ENCODE measurements at regions of chr6 and their contacts with region 1.

Region 1: GRCh38 chr6:12911387-12911960 is 194.9 kb downstream of the PHACTR1 start:
- DNase-seq: no peak
- H3K4me3 ChIP-seq: no peak overlapping the region
- H3K27ac ChIP-seq: no peak overlapping the region
- H3K4me1 ChIP-seq: no peaks in the 10 kb centered on the region
- H3K27me3 ChIP-seq: no peaks in the 10 kb centered on the region
- CTCF ChIP-seq: peak; percentile 59 to 70 (median 64)

Region 2: GRCh38 chr6:12545619-12546409 is 365.7 kb before region 1 on chr6:
- intact Hi-C with region 1: no loop called
- DNase-seq: no peak
- H3K4me3 ChIP-seq: no peak overlapping the region
- H3K27ac ChIP-seq: peak overlapping the region; percentile 15 to 59
- H3K4me1 ChIP-seq: peaks cover 4 to 28% of the 10 kb centered on the region in 2 donors
- H3K27me3 ChIP-seq: no peaks in the 10 kb centered on the region
- CTCF ChIP-seq: no peak

Region 3: DNA sequence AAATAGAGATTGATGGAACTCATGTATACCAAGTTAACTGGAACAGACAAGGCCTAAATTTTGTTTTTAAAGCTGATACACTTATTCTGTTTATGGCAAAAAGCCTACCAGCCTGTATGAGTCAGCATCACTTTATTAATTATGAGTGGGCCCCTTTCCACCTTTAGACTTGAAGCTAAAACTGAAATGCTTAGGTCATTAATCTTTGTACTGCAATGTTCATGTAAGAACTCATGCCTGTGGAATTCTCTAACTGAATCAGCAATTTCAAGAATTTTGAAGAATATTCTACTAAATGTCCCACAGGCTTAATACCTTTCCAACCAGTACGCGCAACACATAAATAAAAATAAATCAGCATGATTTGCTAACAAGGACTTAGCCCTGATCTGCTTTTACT is 335.1 kb before region 1 on chr6:
- intact Hi-C with region 1: no loop called
- DNase-seq: no peak
- H3K4me3 ChIP-seq: no peak overlapping the region
- H3K27ac ChIP-seq: no peak overlapping the region
- H3K4me1 ChIP-seq: peaks cover 0 to 4% of the 10 kb centered on the region in 2 donors
- H3K27me3 ChIP-seq: no peaks in the 10 kb centered on the region
- CTCF ChIP-seq: no peak

Region 4: DNA sequence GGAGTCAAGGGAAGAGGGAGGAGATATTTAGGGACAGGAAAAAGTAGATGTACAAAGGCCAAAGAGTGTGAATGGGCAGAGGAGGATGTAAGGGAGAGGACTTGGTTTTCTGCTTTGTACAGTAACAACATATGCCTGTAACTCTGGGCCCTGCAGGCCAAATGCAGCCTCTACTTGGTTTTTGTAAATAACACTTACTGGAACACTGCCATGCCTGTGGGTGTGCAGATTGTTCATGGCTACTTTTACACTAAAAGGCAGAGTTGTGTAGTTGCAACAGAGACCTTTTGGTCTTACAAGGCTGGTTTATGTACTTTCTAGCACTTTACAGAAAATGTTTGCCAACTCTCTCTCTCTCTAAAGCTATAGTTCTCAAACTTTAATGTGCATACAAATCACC is 37.8 kb before region 1 on chr6:
- intact Hi-C with region 1: no loop called
- DNase-seq: no peak
- H3K4me3 ChIP-seq: no peak overlapping the region
- H3K27ac ChIP-seq: no peak overlapping the region
- H3K4me1 ChIP-seq: no peaks in the 10 kb centered on the region
- H3K27me3 ChIP-seq: no peaks in the 10 kb centered on the region
- CTCF ChIP-seq: no peak

Region 5: GRCh38 chr6:12950976-12951375 is 39.5 kb after region 1 on chr6:
- intact Hi-C with region 1: loop called (anchors 5 kb)
- DNase-seq: no peak
- H3K4me3 ChIP-seq: no peak overlapping the region
- H3K27ac ChIP-seq: no peak overlapping the region
- H3K4me1 ChIP-seq: no peaks in the 10 kb centered on the region
- H3K27me3 ChIP-seq: no peaks in the 10 kb centered on the region
- CTCF ChIP-seq: no peak

Region 6: DNA sequence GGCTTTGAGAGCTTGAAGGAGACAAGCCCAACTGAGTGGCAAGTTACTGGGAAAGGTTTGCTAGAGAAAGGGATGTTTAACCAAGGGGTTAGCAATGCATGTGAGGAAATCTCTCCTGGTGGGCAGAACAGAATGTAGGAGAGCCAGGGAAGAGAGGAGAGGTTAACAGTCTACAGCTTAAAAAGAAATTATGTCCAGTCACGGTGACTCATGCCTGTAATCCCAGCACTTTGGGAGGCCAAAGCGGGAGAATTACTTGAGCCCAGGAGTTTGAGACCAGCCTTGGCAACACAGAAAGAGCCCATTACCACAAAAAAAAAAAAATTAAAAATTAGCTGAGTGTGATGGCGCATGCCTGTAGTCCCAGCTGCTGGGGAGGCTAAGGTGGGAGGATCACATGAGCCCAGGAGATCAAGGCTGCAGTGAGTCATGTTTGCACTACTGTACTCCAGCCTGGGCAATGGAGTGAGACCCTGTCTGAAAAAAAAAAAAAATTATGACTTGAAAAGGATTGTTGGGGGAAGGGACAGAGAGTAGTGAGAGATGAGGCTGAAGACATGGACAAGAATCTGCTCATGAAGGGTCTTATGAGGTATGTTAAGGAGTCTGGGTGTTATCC is 151.9 kb after region 1 on chr6:
- intact Hi-C with region 1: no loop called
- DNase-seq: no peak
- H3K4me3 ChIP-seq: no peak overlapping the region
- H3K27ac ChIP-seq: no peak overlapping the region
- H3K4me1 ChIP-seq: peaks cover 0 to 9% of the 10 kb centered on the region in 2 donors
- H3K27me3 ChIP-seq: no peaks in the 10 kb centered on the region
- CTCF ChIP-seq: no peak

Region 7: GRCh38 chr6:13194852-13195251 is 283.4 kb after region 1 on chr6:
- intact Hi-C with region 1: loop called (anchors 10 kb)
- DNase-seq: peak in 1 of 2 donors; percentile 69
- H3K4me3 ChIP-seq: no peak overlapping the region
- H3K27ac ChIP-seq: peak overlapping the region in 1 of 2 donors; percentile 41
- H3K4me1 ChIP-seq: peaks cover 0 to 4% of the 10 kb centered on the region in 2 donors
- H3K27me3 ChIP-seq: no peaks in the 10 kb centered on the region
- CTCF ChIP-seq: peak; percentile 7 to 32 (median 31)

Region 8: DNA sequence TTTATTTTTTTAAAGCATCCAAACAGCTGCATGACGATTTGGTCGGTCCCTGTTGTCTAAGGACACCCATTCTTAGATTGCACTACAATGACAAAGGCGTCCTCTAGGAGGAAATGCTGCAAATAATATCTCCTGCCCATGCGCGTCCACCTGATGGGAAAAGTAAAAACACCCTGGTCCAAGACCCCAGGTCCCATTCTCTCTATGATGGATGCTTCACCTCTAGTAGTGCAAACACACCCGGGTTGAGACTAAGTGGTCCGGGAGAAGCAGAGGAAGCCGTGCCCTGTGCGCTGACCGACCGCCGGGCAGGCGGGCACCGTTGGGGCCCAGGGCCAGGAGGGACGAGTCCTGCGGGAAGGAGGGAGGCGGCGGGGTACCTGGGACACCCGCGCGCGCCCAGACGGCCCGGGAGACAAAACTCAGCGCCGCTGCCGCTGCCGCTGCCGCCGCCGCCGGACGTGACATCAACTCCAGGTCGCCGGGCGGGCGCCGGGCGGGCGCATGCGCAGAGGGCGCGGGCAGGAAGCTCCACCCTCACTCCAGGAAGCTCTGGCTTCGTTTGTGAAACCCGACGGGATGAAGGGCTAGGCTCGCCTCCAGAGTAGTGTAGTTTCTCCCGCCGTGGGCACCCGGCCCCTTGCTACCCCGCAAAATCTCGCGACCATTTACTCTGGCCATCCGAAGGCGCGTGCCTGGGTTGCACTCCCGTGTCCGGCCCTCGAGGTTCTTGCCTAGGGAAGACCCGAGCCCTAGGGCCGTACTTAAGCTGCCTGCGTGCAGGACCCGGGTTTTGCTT is 416.8 kb after region 1 on chr6 and contains the start of gene TBC1D7:
- intact Hi-C with region 1: loop called (anchors 1 kb)
- DNase-seq: peak; percentile 66 to 97
- H3K4me3 ChIP-seq: peak within 1 kb of the TSS; percentile 73 to 92
- H3K27ac ChIP-seq: peak within 1 kb of the TSS; percentile 84 to 96
- H3K4me1 ChIP-seq: peaks cover 2 to 3% of the 10 kb centered on the region in 2 donors
- H3K27me3 ChIP-seq: no peaks in the 10 kb centered on the region
- CTCF ChIP-seq: peak in 2 of 3 experiments; percentile 7 to 35
- total RNA-seq, gene TBC1D7: 79.5 TPM

Measured in ascending aorta (tissue), 2 donors.